Right ventricle myocardium inferior (tissue), 1 donor: ENCODE measurements at regions of chr5 and their contacts with region 1.

Region 1: GRCh38 chr5:35881758-35882157 is 25.1 kb downstream of the IL7R start:
- DNase-seq: no peak
- ATAC-seq: no peak

Region 2: DNA sequence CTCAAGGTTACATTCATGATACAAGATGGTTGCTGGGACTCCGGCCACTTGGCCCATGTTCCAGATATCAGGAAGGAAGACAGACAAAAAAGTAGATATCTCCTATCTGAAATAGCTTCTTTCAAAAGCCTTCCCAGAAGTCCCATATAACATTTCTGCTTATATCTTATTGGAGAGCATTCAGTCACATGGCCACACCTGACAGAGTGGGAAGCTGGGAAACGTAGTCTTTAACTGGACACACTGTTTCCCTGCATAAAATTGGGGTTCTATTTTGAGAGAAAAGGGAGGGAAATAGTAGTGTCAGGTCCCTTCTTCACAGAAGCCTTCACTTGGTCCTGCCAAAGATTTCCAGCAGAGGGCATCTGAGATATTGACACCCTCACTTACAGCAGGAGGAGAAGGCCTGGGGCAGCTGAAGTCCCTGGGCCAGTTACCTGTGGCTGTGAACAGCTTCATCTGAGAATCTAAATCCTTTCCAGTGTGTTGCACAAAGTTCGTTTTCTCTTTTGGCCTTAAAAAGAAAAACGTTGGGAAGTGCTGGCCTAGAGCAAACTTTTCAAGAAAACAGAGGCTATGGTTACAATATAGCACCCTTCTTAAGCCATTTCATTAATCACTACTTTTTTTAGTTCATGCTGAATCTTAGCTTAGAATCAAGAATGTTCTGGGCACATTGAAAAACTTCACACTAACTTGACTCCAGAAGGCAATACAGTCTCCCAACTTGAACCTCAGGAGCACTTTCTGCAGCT is 230.6 kb before region 1 on chr5:
- intact Hi-C with region 1: no loop called
- DNase-seq: no peak
- ATAC-seq: no peak

Region 3: GRCh38 chr5:35815089-35815936 is 66.4 kb before region 1 on chr5:
- intact Hi-C with region 1: loop called (anchors 2 kb)
- DNase-seq: no peak
- ATAC-seq: no peak

Region 4: GRCh38 chr5:35979715-35980114 is 98.0 kb after region 1 on chr5:
- intact Hi-C with region 1: no loop called
- DNase-seq: no peak
- ATAC-seq: no peak